ENCODE measurements at regions of chr4 and their contacts with region 1.

Region 1: GRCh38 chr4:77344784-77345183 is 187.8 kb downstream of the CCNG2 start:
- DNase-seq: no peak
- H3K4me3 ChIP-seq: no peak overlapping the region
- H3K27ac ChIP-seq: no peak overlapping the region
- H3K4me1 ChIP-seq: no peaks in the 10 kb centered on the region
- H3K27me3 ChIP-seq: no peaks in the 10 kb centered on the region
- CTCF ChIP-seq: no peak
- EP300 ChIP-seq: no peak
- POLR2A ChIP-seq: no peak

Region 2: GRCh38 chr4:79141530-79141929 is 1796.7 kb after region 1 on chr4:
- intact Hi-C with region 1: loop called in 1 of 4 experiments (anchors 5 kb)
- DNase-seq: no peak
- H3K4me3 ChIP-seq: no peak overlapping the region
- H3K27ac ChIP-seq: no peak overlapping the region
- H3K4me1 ChIP-seq: no peaks in the 10 kb centered on the region
- H3K27me3 ChIP-seq: no peaks in the 10 kb centered on the region
- CTCF ChIP-seq: no peak
- EP300 ChIP-seq: no peak
- POLR2A ChIP-seq: no peak